ENCODE measurements at regions of chr12 and their contacts with region 1.

Region 1: GRCh38 chr12:92248977-92249376 is 103.3 kb upstream of the BTG1 start:
- DNase-seq: peak in 1 of 2 donors; percentile 18
- H3K4me3 ChIP-seq: no peak overlapping the region
- H3K27ac ChIP-seq: no peak overlapping the region
- H3K4me1 ChIP-seq: peaks cover 0 to 5% of the 10 kb centered on the region in 2 donors
- H3K27me3 ChIP-seq: no peaks in the 10 kb centered on the region
- CTCF ChIP-seq: no peak
- POLR2A ChIP-seq: no peak

Region 2: GRCh38 chr12:92041742-92042141 is 207.2 kb before region 1 on chr12:
- intact Hi-C with region 1: loop called (anchors 5 kb)
- DNase-seq: no peak
- H3K4me3 ChIP-seq: no peak overlapping the region
- H3K27ac ChIP-seq: no peak overlapping the region
- H3K4me1 ChIP-seq: no peaks in the 10 kb centered on the region
- H3K27me3 ChIP-seq: no peaks in the 10 kb centered on the region
- CTCF ChIP-seq: no peak
- POLR2A ChIP-seq: no peak